ENCODE measurements at regions of chr1 and their contacts with region 1.

Region 1: DNA sequence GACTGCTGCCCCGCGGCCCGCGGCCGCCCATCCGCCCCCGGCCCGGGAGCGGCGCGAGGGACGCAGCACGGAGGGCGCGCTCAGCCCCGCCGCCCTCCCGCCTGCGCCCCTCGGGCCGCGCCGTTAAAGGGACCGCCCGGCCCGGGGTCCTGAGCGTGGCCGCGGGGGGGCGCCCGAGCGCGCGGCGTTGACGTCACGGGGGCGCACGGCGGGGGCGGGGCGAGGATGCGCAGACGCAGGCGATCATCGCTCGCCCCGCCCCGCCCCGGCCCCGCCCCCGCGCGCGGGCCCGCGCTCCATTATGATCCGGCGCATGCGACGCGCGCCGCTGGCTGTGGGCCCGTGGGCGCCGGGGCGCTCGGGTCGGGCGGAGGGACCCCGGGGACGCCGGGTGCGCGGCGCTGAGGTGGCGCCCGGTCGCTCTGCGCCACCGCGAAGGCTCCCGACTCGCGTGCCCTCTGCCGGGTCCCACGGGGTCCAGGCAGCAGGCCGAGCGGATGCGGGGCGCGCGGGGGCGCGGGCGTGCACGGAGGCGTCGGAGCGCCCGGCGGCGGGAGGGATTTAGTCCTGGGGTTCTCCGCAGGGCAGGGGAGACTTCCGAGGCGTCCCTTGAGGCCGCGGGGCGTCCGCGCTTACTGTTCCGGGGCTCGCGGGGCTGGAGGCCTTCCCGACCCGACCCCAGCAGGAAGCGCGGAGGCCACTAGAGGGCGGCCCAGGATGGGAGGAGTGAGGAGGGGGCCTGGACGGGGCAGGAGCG is at the start of gene DVL1:
- DNase-seq: no peak
- ATAC-seq: 0 out of 3 replicates have a peak, but pooled peaks have one; percentile 3
- H3K4me3 ChIP-seq: peak within 1 kb of the TSS; percentile 79 to 90 (median 85)
- H3K27ac ChIP-seq: peak within 1 kb of the TSS; percentile 82
- H3K4me1 ChIP-seq: peaks cover 49% of the 10 kb centered on the region
- H3K27me3 ChIP-seq: no peaks in the 10 kb centered on the region
- CTCF ChIP-seq: peak; percentile 78
- EP300 ChIP-seq: no peak
- POLR2A ChIP-seq: no peak
- RAD21 ChIP-seq: peak; percentile 58
- total RNA-seq, gene DVL1: 42.8 and 60.4 TPM in 2 replicates

Region 2: DNA sequence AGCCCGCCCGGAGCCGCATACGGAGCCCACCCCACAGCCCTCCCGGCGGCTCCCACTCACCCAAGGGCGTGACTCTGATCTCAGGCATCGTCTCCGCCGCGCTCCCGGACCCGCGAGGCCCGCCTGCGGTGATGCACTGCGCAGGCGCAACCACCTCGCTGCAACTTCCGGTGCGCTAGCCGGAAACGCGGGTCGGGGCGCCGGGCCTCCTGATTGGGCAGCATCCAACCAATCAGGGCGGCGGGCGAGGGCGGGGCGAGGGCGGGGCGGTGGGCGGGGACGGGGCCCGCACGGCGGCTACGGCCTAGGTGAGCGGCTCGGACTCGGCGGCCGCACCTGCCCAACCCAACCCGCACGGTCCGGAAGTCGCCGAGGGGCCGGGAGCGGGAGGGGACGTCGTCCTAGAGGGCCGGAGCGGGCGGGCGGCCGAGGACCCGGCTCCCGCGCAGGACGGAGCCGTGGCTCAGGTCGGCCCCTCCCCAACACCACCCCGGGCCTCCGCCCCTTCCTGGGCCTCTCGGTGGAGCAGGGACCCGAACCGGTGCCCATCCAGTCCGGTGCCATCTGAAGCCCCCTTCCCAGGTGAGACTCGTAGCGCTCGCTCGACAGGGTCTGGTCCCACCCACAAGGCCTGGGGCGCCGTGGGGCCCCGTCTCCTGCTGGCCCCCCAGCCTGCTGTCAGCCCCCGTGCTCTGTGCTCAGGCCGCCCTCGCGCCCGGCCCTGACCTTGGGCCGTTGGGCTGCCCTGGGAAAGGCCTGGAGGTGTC is 24.7 kb before region 1 on chr1 and contains the starts of genes CPTP and INTS11:
- CTCF ChIA-PET with region 1: no interaction called
- POLR2A ChIA-PET with region 1: interaction called, 4 read pairs
- in situ Hi-C with region 1: no loop called
- intact Hi-C with region 1: loop called (anchors 2 kb)
- DNase-seq: peak; percentile 79
- ATAC-seq: peak; percentile 83
- H3K4me3 ChIP-seq: peak within 1 kb of the TSS; percentile 68 to 99 (median 95)
- H3K27ac ChIP-seq: peak within 1 kb of the TSS; percentile 77
- H3K4me1 ChIP-seq: peaks cover 23% of the 10 kb centered on the region
- H3K27me3 ChIP-seq: no peaks in the 10 kb centered on the region
- CTCF ChIP-seq: no peak
- EP300 ChIP-seq: no peak
- POLR2A ChIP-seq: peak in 1 of 2 experiments; percentile 47; a peak in 1 of 4 replicates
- RAD21 ChIP-seq: no peak
- total RNA-seq, gene CPTP: 7.2 and 9.3 TPM in 2 replicates
- total RNA-seq, gene INTS11: 46.4 and 52.8 TPM in 2 replicates

Region 3: DNA sequence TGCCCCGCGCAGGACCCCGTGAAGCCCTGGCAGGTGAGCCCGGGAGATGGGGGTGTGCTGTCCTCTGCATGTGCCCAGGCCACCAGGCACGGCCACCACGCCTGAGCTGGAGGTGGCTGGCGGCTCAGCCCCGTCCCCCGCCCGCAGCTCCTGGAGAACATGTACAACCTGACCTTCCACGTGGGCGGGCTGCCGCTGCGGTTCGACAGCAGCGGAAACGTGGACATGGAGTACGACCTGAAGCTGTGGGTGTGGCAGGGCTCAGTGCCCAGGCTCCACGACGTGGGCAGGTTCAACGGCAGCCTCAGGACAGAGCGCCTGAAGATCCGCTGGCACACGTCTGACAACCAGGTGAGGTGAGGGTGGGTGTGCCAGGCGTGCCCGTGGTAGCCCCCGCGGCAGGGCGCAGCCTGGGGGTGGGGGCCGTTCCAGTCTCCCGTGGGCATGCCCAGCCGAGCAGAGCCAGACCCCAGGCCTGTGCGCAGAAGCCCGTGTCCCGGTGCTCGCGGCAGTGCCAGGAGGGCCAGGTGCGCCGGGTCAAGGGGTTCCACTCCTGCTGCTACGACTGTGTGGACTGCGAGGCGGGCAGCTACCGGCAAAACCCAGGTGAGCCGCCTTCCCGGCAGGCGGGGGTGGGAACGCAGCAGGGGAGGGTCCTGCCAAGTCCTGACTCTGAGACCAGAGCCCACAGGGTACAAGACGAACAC is 16.5 kb before region 1 on chr1:
- CTCF ChIA-PET with region 1: no interaction called
- POLR2A ChIA-PET with region 1: interaction called, 12 read pairs
- in situ Hi-C with region 1: no loop called
- intact Hi-C with region 1: no loop called
- DNase-seq: no peak
- ATAC-seq: 0 out of 3 replicates have a peak, but pooled peaks have one; percentile 0
- H3K4me3 ChIP-seq: no peak overlapping the region
- H3K27ac ChIP-seq: no peak overlapping the region
- H3K4me1 ChIP-seq: peaks cover 24% of the 10 kb centered on the region
- H3K27me3 ChIP-seq: 0 out of 5 replicates have a peak, but pooled peaks cover 0 to 4% of the 10 kb centered on the region in 2 experiments
- CTCF ChIP-seq: no peak
- EP300 ChIP-seq: no peak
- POLR2A ChIP-seq: no peak
- RAD21 ChIP-seq: no peak

Measured in HepG2 (cell line).